SK-N-SH (cell line): ENCODE measurements at regions of chr9 and their contacts with region 1.

Region 1: GRCh38 chr9:86434039-86434726 is 80.0 kb upstream of the TUT7 start:
- DNase-seq: peak; percentile 56
- H3K4me3 ChIP-seq: no peak overlapping the region; a peak in 1 of 4 replicates
- H3K27ac ChIP-seq: no peak overlapping the region
- H3K4me1 ChIP-seq: no peaks in the 10 kb centered on the region
- H3K27me3 ChIP-seq: no peaks in the 10 kb centered on the region
- CTCF ChIP-seq: peak; percentile 92
- EP300 ChIP-seq: no peak
- RAD21 ChIP-seq: peak; percentile 91

Region 2: DNA sequence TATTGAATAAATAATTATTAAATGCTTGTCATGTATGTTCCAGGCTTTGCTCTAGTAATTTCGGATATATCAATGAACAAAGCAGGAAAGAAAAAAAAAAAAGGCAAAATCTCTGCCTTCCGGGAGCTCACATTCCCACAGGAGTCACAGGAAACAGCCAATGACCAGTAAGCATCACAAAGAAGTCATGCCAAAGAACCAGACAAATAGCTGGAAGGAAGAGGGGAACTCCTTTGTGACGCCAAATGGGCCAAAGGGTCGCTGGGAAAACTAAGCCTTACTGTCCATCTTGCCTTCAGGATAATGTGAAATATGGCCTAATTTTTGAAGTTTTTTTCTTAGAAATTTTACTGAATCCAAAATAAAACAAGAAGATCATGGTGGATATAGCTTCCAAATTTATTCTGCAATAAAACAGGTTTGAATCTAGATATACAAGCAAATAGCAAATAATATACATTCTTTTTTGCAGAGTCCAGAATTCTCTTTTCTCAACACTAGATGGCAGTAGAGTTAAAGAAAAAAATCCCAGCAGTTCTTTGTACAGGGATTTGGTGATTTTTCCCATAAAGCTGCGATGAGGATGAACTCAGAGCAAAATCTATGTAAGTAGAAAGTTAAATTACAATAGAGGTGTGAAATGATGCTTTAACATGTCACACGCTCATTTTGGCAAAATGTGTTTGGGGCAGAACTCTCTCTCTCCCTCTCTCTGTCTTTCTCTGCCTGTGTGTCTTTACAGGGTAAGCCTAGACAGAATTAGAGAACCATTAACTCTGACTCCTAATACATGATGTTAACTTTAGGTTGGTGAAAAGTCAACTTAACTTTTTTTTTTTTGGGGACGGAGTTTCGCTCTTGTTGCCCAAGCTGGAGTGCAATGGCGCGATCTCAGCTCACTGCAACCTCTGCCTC is 20.0 kb before region 1 on chr9:
- CTCF ChIA-PET with region 1: interaction called, 56 read pairs
- POLR2A ChIA-PET with region 1: no interaction called
- DNase-seq: peak; percentile 49
- H3K4me3 ChIP-seq: no peak overlapping the region
- H3K27ac ChIP-seq: no peak overlapping the region
- H3K4me1 ChIP-seq: no peaks in the 10 kb centered on the region
- H3K27me3 ChIP-seq: no peaks in the 10 kb centered on the region
- CTCF ChIP-seq: peak; percentile 81
- EP300 ChIP-seq: no peak
- RAD21 ChIP-seq: peak; percentile 80

Region 3: DNA sequence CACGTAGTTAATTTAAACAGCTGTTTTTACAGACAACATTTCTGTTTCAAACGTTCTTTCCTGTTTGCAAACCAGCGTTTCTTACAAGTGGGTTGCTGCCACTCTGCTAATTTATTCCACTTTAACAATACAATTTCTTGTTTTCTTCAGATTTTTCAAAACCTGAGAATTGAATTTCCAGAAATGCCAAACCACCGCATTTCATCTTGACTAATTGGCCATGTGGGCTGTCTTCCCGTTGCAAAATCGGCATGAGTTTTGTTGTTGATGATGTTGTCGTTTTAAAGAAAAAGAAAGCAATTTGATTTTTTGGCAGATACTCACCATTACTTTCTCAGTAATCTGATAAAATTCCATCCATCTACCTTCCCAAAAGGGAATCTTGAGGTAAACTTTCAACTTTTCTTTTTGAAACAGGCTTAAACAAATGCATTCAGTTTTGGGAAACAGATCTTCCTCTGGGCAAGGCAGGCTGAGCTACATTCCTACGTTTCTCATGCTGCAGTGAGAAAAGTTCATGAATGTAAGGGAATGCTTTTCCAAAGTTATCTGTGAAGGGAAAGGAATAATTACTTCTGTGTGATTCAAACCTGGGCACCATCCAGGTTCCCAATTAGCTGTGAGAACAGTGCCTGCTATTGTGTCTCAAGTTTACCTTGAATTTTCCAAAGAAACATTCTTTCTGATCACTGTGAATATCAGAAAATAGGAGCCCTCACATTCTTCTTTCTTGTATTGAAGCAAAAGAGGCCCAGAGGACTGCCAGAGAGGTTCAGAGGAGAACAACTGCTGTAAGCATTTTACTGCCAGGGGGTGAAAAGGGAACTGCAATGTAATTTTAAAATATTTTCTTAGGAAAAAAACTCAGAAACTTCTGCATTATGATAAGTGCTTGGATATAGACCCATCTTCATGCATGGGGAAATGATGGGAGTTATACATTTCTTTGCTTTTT is 20.8 kb after region 1 on chr9:
- CTCF ChIA-PET with region 1: interaction called, 19 read pairs
- POLR2A ChIA-PET with region 1: no interaction called
- DNase-seq: no peak
- H3K4me3 ChIP-seq: no peak overlapping the region
- H3K27ac ChIP-seq: no peak overlapping the region
- H3K4me1 ChIP-seq: peaks cover 4 to 14% of the 10 kb centered on the region in 2 experiments; a peak in 2 of 4 replicates
- H3K27me3 ChIP-seq: no peaks in the 10 kb centered on the region
- CTCF ChIP-seq: no peak
- EP300 ChIP-seq: no peak
- RAD21 ChIP-seq: no peak

Region 4: DNA sequence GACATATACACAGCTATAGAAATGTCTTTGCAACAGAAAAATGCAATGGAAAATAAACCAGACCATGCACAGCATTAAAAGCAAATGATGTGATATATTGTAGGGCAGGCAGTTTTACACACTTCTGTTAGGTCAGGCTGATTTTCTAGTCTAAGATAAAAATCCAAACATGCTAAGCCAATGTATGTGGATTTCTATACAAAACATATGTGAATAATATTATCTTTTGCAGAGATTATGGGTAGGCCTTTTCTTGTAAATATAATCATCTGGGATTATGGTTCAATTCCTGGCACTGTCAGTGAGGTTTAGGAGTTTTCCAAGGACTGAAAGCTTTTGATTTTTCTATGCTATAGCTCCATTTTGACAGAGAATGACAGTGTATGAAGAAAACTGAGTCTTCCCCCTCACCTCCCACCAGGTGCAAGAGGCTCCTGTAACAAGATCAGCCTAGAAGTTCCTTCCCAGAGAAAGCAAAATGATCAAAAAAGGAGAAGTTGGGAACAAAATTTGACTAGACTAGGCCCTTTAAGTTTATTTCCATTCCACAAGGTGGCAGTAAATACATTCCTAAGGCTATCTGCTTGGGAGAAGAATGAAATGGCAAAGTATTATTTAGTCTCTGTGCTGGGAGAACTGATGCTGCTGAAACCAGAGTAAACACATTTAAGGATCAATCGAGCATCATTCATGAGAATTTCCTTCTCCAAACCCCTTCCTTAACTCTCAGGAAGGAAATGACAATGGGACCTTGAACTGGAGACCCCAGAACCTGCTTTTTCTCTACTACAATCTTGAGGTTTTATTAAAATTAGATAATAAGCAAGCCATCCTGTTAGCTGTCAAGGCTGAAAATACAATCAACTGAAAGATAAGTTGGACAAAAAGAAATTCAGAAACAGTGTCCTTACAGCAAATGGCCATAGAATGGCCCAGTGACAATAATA is 53.0 kb after region 1 on chr9:
- CTCF ChIA-PET with region 1: interaction called, 32 read pairs
- POLR2A ChIA-PET with region 1: no interaction called
- DNase-seq: peak; percentile 59
- H3K4me3 ChIP-seq: no peak overlapping the region; a peak in 1 of 4 replicates
- H3K27ac ChIP-seq: peak overlapping the region in 1 of 2 experiments; percentile 23; a peak in 1 of 4 replicates
- H3K4me1 ChIP-seq: no peaks in the 10 kb centered on the region; a peak in 2 of 4 replicates
- H3K27me3 ChIP-seq: no peaks in the 10 kb centered on the region
- CTCF ChIP-seq: peak; percentile 76
- EP300 ChIP-seq: no peak
- RAD21 ChIP-seq: peak; percentile 95

Region 5: GRCh38 chr9:87324613-87325194 is 890.5 kb after region 1 on chr9:
- CTCF ChIA-PET with region 1: interaction called, 43 read pairs
- POLR2A ChIA-PET with region 1: no interaction called
- DNase-seq: peak; percentile 64
- H3K4me3 ChIP-seq: no peak overlapping the region
- H3K27ac ChIP-seq: no peak overlapping the region
- H3K4me1 ChIP-seq: peaks cover 2 to 8% of the 10 kb centered on the region in 2 experiments; a peak in 3 of 4 replicates
- H3K27me3 ChIP-seq: no peaks in the 10 kb centered on the region
- CTCF ChIP-seq: peak; percentile 84
- EP300 ChIP-seq: no peak
- RAD21 ChIP-seq: peak; percentile 100